ENCODE measurements at regions of chr6 and their contacts with region 1.

Region 1: GRCh38 chr6:150891888-150892485 is 26.5 kb downstream of the MTHFD1L start:
- DNase-seq: no peak
- ATAC-seq: peak; percentile 74

Region 2: GRCh38 chr6:151335930-151336329 is 443.9 kb after region 1 on chr6:
- intact Hi-C with region 1: loop called (anchors 2 kb)
- DNase-seq: no peak
- ATAC-seq: no peak